ENCODE measurements at regions of chr5 and their contacts with region 1.

Region 1: GRCh38 chr5:82351754-82352145 is 73.6 kb upstream of the RPS23 start:
- DNase-seq: peak; percentile 85
- H3K4me3 ChIP-seq: no peak overlapping the region
- H3K27ac ChIP-seq: peak overlapping the region; percentile 63
- H3K4me1 ChIP-seq: peaks cover 28% of the 10 kb centered on the region
- H3K27me3 ChIP-seq: no peaks in the 10 kb centered on the region
- CTCF ChIP-seq: peak; percentile 54 to 58
- POLR2A ChIP-seq: no peak

Region 2: GRCh38 chr5:82312373-82312856 is 39.3 kb before region 1 on chr5:
- CTCF ChIA-PET with region 1: interaction called, 12 read pairs
- POLR2A ChIA-PET with region 1: no interaction called
- dilution Hi-C with region 1: no loop called
- intact Hi-C with region 1: no loop called
- DNase-seq: peak; percentile 63
- H3K4me3 ChIP-seq: no peak overlapping the region
- H3K27ac ChIP-seq: no peak overlapping the region
- H3K4me1 ChIP-seq: peaks cover 7% of the 10 kb centered on the region
- H3K27me3 ChIP-seq: peaks cover 3 to 4% of the 10 kb centered on the region in 2 experiments
- CTCF ChIP-seq: peak; percentile 77 to 90
- POLR2A ChIP-seq: no peak

Region 3: DNA sequence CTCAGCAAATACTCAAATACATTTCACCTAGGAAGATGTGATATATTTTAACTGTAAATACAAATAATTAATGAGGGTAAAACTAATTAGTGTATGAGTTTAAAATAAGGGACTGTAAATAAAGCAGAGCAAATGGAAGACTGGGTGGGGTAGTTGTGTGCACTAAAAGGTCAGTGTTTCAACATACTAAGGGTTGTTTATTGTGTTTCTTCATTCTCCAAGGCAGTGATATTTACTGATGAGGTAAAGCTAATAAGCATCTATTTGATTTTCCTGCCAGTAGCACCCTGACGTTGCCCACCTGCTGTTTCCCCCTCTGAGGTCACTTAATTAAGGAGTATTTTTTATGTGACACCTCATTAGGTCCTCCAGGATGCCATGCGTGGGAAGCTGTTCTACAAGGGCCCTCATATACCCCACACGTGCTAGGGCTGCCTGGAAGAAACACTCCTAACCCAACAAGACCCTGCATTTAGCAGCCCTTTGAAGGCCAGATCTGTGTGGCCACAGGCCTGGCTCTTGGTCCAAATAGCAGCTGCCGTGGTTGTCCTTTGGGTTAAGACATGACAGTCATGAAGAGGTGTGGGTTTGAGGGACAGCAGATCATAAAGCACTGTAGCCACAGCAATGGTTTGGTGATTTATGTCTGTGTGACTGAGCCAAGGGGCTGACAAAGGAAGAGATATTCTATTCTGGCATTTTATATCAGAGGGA is 23.9 kb after region 1 on chr5:
- CTCF ChIA-PET with region 1: no interaction called
- POLR2A ChIA-PET with region 1: no interaction called
- dilution Hi-C with region 1: no loop called
- intact Hi-C with region 1: no loop called
- DNase-seq: no peak
- H3K4me3 ChIP-seq: no peak overlapping the region
- H3K27ac ChIP-seq: no peak overlapping the region
- H3K4me1 ChIP-seq: no peaks in the 10 kb centered on the region
- H3K27me3 ChIP-seq: no peaks in the 10 kb centered on the region
- CTCF ChIP-seq: no peak
- POLR2A ChIP-seq: no peak

Region 4: DNA sequence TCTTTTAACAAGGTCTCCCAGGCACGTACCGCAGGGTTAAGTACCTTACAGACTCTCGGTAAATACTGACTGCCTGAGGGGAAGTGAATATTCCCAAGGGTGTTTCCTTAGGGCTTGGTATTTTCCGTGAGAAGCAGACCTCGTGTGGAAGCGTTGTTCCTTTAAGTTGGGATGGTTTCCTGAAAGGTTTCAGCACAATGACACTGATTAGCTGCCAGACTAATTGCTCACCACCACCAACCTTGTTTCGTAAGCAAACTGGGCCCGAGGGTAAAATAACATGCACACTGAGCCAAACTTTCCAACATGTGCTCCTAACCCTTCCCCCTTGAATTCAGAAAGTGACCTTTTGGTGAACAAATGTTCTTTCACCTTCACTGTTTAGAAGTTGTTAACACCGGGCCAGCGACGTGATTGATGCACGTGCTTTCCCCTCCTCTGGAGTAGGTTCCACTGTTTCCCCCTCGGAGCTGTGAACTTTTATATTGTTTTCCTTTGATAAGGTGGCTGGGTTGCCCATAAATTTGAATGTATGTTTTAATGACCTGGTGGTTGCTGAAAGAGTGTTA is 54.5 kb after region 1 on chr5:
- CTCF ChIA-PET with region 1: interaction called, 3 read pairs
- POLR2A ChIA-PET with region 1: no interaction called
- dilution Hi-C with region 1: no loop called
- intact Hi-C with region 1: loop called (anchors 1 kb)
- DNase-seq: peak; percentile 100
- H3K4me3 ChIP-seq: peak overlapping the region in 1 of 3 experiments; percentile 1
- H3K27ac ChIP-seq: peak overlapping the region; percentile 99
- H3K4me1 ChIP-seq: peaks cover 28% of the 10 kb centered on the region
- H3K27me3 ChIP-seq: no peaks in the 10 kb centered on the region
- CTCF ChIP-seq: no peak
- POLR2A ChIP-seq: peak; percentile 65

Region 5: GRCh38 chr5:82445726-82446335 is 94.1 kb after region 1 on chr5:
- CTCF ChIA-PET with region 1: no interaction called
- POLR2A ChIA-PET with region 1: no interaction called
- dilution Hi-C with region 1: no loop called
- intact Hi-C with region 1: no loop called
- DNase-seq: no peak
- H3K4me3 ChIP-seq: no peak overlapping the region
- H3K27ac ChIP-seq: no peak overlapping the region
- H3K4me1 ChIP-seq: no peaks in the 10 kb centered on the region
- H3K27me3 ChIP-seq: peaks cover 0 to 13% of the 10 kb centered on the region in 2 experiments
- CTCF ChIP-seq: no peak
- POLR2A ChIP-seq: no peak

Region 6: GRCh38 chr5:82605441-82605973 is 253.8 kb after region 1 on chr5:
- CTCF ChIA-PET with region 1: no interaction called
- POLR2A ChIA-PET with region 1: no interaction called
- dilution Hi-C with region 1: no loop called
- intact Hi-C with region 1: no loop called
- DNase-seq: no peak
- H3K4me3 ChIP-seq: no peak overlapping the region
- H3K27ac ChIP-seq: no peak overlapping the region
- H3K4me1 ChIP-seq: no peaks in the 10 kb centered on the region
- H3K27me3 ChIP-seq: peaks cover 0 to 5% of the 10 kb centered on the region in 2 experiments
- CTCF ChIP-seq: no peak
- POLR2A ChIP-seq: no peak

Region 7: DNA sequence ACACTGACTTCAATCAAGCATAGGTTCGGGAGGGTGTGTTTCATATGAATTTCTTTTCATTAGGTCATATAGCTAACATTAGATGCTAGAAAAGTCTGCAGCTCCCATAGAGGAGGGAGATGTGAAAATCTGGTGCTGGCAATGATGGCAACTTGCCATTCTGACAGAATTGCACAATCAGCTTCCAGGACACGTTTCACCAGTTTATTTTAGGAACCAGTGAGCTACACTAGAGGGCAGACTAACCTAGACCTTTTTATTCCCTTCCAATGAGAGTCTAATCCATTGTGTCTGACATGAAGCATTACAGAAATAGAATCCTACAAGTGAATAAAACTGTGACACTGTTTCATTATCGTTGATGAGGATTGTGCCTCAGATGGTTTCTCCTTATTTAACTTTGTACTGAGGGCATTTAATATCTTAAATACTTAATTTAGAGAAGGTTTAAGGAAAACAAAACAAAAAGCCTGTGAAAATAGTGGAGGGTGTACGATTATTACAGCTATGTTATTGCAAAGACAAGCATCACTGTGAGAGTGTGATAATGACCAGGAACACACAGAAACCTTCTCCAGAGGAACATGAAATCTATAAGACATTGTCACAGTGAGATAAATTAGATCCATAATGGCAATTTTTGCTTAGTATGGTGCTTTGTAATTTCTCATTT is 289.7 kb after region 1 on chr5:
- CTCF ChIA-PET with region 1: interaction called, 3 read pairs
- POLR2A ChIA-PET with region 1: no interaction called
- dilution Hi-C with region 1: no loop called
- intact Hi-C with region 1: loop called (anchors 1 kb)
- DNase-seq: peak; percentile 81
- H3K4me3 ChIP-seq: no peak overlapping the region
- H3K27ac ChIP-seq: no peak overlapping the region
- H3K4me1 ChIP-seq: no peaks in the 10 kb centered on the region
- H3K27me3 ChIP-seq: peaks cover 2% of the 10 kb centered on the region in 2 experiments
- CTCF ChIP-seq: peak; percentile 39 to 56
- POLR2A ChIP-seq: no peak

Region 8: GRCh38 chr5:83095957-83096539 is 744.3 kb after region 1 on chr5:
- CTCF ChIA-PET with region 1: no interaction called
- POLR2A ChIA-PET with region 1: no interaction called
- dilution Hi-C with region 1: no loop called
- intact Hi-C with region 1: loop called (anchors 1 kb)
- DNase-seq: peak; percentile 51
- H3K4me3 ChIP-seq: no peak overlapping the region
- H3K27ac ChIP-seq: no peak overlapping the region
- H3K4me1 ChIP-seq: peaks cover 16% of the 10 kb centered on the region
- H3K27me3 ChIP-seq: peaks cover 17 to 24% of the 10 kb centered on the region in 2 experiments
- CTCF ChIP-seq: no peak
- POLR2A ChIP-seq: no peak

Region 9: GRCh38 chr5:83564069-83564749 is 1212.5 kb after region 1 on chr5:
- CTCF ChIA-PET with region 1: interaction called, 6 read pairs
- POLR2A ChIA-PET with region 1: no interaction called
- dilution Hi-C with region 1: no loop called
- intact Hi-C with region 1: loop called (anchors 1 kb)
- DNase-seq: peak; percentile 81
- H3K4me3 ChIP-seq: no peak overlapping the region
- H3K27ac ChIP-seq: no peak overlapping the region
- H3K4me1 ChIP-seq: peaks cover 4% of the 10 kb centered on the region
- H3K27me3 ChIP-seq: peaks cover 0 to 8% of the 10 kb centered on the region in 2 experiments
- CTCF ChIP-seq: peak; percentile 16 to 24
- POLR2A ChIP-seq: no peak

Measured in endothelial cell of umbilical vein (primary cell).